H1 (cell line): ENCODE measurements at regions of chr10 and their contacts with region 1.

Region 1: GRCh38 chr10:12768156-12769100 is 233.1 kb downstream of the CCDC3 start:
- DNase-seq: peak in 1 of 2 experiments; percentile 50
- H3K4me3 ChIP-seq: peak overlapping the region in 2 of 4 experiments; percentile 20 to 46; a peak in 3 of 8 replicates
- H3K27ac ChIP-seq: no peak overlapping the region
- H3K4me1 ChIP-seq: peaks cover 12 to 32% (median 25%) of the 10 kb centered on the region in 4 experiments
- H3K27me3 ChIP-seq: no peaks in the 10 kb centered on the region; a peak in 1 of 7 replicates
- CTCF ChIP-seq: no peak
- EP300 ChIP-seq: no peak
- POLR2A ChIP-seq: no peak
- RAD21 ChIP-seq: no peak

Region 2: GRCh38 chr10:12729885-12730284 is 38.5 kb before region 1 on chr10:
- CTCF ChIA-PET with region 1: interaction called, 14 read pairs
- POLR2A ChIA-PET with region 1: no interaction called
- DNase-seq: peak; percentile 15 to 88
- H3K4me3 ChIP-seq: no peak overlapping the region
- H3K27ac ChIP-seq: no peak overlapping the region
- H3K4me1 ChIP-seq: peaks cover 0 to 5% (median 1%) of the 10 kb centered on the region in 4 experiments; a peak in 5 of 7 replicates
- H3K27me3 ChIP-seq: no peaks in the 10 kb centered on the region
- CTCF ChIP-seq: peak; percentile 83 to 98 (median 87)
- EP300 ChIP-seq: no peak
- POLR2A ChIP-seq: no peak
- RAD21 ChIP-seq: peak; percentile 88 to 92